A673 (cell line): ENCODE measurements at regions of chr3 and their contacts with region 1.

Region 1: DNA sequence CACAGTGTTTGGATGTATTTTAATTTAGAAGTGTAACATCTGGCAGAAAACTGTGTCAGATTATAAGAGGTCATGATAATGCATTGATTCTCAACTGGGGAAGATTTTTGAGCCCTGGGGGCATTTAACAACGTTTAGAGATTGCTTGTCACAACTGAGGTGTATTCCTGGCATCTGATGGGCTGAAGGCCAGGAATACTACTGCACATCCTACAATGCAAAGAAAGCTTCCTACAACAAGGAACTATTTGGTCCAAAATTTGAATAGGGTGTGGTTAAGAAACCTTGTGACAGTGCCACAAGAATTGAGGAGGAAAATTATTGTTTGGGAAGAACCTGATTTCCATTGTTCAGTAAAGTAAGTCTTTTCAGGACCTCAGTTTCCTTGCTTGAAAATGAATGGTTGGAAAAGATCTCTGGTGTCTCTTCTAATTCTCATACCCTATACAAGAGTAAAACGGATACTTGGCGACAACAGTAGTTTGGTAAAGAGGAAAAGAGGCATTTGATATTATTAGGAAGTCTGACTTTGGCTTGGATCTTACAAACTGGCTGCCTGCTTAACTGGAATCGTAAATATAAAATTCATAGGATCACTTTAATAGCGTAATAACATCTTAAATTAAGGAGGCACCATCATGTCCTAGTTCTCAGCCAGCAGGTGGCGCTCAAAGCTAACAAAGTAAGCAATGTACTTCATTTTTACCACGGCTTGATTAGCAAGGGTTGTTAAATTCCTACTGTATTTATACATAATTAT is 4.3 kb downstream of the DAZL start:
- DNase-seq: peak; percentile 84
- H3K4me3 ChIP-seq: no peak overlapping the region
- H3K27ac ChIP-seq: no peak overlapping the region
- H3K4me1 ChIP-seq: no peaks in the 10 kb centered on the region
- H3K27me3 ChIP-seq: peaks cover 48% of the 10 kb centered on the region
- CTCF ChIP-seq: peak; percentile 85

Region 2: GRCh38 chr3:16079519-16079918 is 521.4 kb before region 1 on chr3:
- CTCF ChIA-PET with region 1: no interaction called
- POLR2A ChIA-PET with region 1: no interaction called
- intact Hi-C with region 1: no loop called
- DNase-seq: no peak
- H3K4me3 ChIP-seq: no peak overlapping the region
- H3K27ac ChIP-seq: no peak overlapping the region
- H3K4me1 ChIP-seq: no peaks in the 10 kb centered on the region
- H3K27me3 ChIP-seq: no peaks in the 10 kb centered on the region
- CTCF ChIP-seq: no peak

Region 3: GRCh38 chr3:16264708-16265454 is 336.1 kb before region 1 on chr3 and contains the starts of genes DPH3 and OXNAD1:
- CTCF ChIA-PET with region 1: interaction called, 12 read pairs
- POLR2A ChIA-PET with region 1: no interaction called
- intact Hi-C with region 1: no loop called
- DNase-seq: peak; percentile 99
- H3K4me3 ChIP-seq: peak within 1 kb of the TSS; percentile 85
- H3K27ac ChIP-seq: peak within 1 kb of the TSS; percentile 89
- H3K4me1 ChIP-seq: peaks cover 12% of the 10 kb centered on the region
- H3K27me3 ChIP-seq: no peaks in the 10 kb centered on the region
- CTCF ChIP-seq: no peak
- total RNA-seq, gene DPH3: 24.0 and 26.4 TPM in 2 replicates
- total RNA-seq, gene OXNAD1: 19.8 and 21.5 TPM in 2 replicates

Region 4: GRCh38 chr3:16828815-16829214 is 227.9 kb after region 1 on chr3:
- CTCF ChIA-PET with region 1: no interaction called
- POLR2A ChIA-PET with region 1: no interaction called
- intact Hi-C with region 1: loop called (anchors 5 kb)
- DNase-seq: peak; percentile 37
- H3K4me3 ChIP-seq: no peak overlapping the region
- H3K27ac ChIP-seq: no peak overlapping the region
- H3K4me1 ChIP-seq: no peaks in the 10 kb centered on the region
- H3K27me3 ChIP-seq: peaks cover 4% of the 10 kb centered on the region
- CTCF ChIP-seq: peak; percentile 45

Region 5: DNA sequence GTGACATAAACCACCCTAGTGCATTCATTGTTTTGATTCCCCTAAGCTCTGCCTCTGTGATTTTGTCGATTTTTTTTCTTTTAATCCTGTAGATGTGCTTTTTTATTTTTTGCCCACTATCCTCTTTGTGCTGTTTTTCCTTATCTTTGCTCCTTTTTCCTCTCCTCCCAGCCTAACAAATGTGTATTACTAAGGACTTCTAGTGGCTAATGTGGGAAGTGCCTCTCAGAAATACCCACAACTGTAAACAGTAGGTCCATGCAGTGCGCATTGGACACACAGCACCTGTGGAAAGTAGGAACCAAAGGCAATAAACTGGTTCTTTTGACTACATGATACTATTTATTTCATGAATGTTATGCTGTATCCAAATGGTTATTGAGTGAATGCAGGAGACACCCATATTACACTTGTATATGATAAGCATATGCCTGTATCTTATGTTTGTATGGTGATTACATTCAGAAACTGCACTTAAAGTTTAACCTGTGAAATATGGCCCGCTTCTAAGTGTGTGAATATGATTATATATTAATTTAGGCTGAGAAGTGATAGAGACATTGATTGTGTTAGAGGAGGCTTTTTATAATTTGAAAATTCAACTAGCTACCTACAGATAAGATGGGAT is 431.6 kb after region 1 on chr3:
- CTCF ChIA-PET with region 1: no interaction called
- POLR2A ChIA-PET with region 1: no interaction called
- intact Hi-C with region 1: loop called (anchors 5 kb)
- DNase-seq: peak; percentile 16
- H3K4me3 ChIP-seq: no peak overlapping the region
- H3K27ac ChIP-seq: no peak overlapping the region
- H3K4me1 ChIP-seq: no peaks in the 10 kb centered on the region
- H3K27me3 ChIP-seq: peaks cover 8% of the 10 kb centered on the region
- CTCF ChIP-seq: peak; percentile 55

Region 6: GRCh38 chr3:17158941-17159682 is 558.2 kb after region 1 on chr3:
- CTCF ChIA-PET with region 1: no interaction called
- POLR2A ChIA-PET with region 1: no interaction called
- intact Hi-C with region 1: no loop called
- DNase-seq: no peak
- H3K4me3 ChIP-seq: no peak overlapping the region
- H3K27ac ChIP-seq: no peak overlapping the region
- H3K4me1 ChIP-seq: no peaks in the 10 kb centered on the region
- H3K27me3 ChIP-seq: no peaks in the 10 kb centered on the region
- CTCF ChIP-seq: no peak

Region 7: DNA sequence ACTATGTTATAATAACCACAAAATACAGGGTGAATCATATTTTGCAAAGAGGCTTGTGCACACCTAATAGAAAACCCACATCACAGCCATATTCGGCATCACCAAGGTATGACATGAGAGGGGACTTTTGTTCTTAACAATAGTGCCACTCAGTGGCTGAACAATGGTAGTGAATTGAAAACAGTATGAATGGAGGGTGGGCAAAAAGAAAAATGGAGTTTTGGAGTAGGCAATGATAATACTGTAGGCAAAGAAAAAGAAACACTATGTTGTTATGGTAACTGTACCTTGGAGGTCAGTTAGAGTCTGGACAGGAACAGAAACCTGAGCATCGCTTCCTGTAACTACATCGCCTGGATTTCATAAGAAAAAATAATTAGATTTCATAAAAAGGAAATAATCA is 632.4 kb after region 1 on chr3:
- CTCF ChIA-PET with region 1: no interaction called
- POLR2A ChIA-PET with region 1: no interaction called
- intact Hi-C with region 1: loop called (anchors 1 kb)
- DNase-seq: peak; percentile 66
- H3K4me3 ChIP-seq: no peak overlapping the region
- H3K27ac ChIP-seq: no peak overlapping the region
- H3K4me1 ChIP-seq: no peaks in the 10 kb centered on the region
- H3K27me3 ChIP-seq: no peaks in the 10 kb centered on the region
- CTCF ChIP-seq: peak; percentile 75

Region 8: GRCh38 chr3:17412950-17413530 is 812.1 kb after region 1 on chr3:
- CTCF ChIA-PET with region 1: no interaction called
- POLR2A ChIA-PET with region 1: no interaction called
- intact Hi-C with region 1: loop called (anchors 2 kb)
- DNase-seq: peak; percentile 60
- H3K4me3 ChIP-seq: no peak overlapping the region
- H3K27ac ChIP-seq: no peak overlapping the region
- H3K4me1 ChIP-seq: no peaks in the 10 kb centered on the region
- H3K27me3 ChIP-seq: no peaks in the 10 kb centered on the region
- CTCF ChIP-seq: peak; percentile 79

Region 9: DNA sequence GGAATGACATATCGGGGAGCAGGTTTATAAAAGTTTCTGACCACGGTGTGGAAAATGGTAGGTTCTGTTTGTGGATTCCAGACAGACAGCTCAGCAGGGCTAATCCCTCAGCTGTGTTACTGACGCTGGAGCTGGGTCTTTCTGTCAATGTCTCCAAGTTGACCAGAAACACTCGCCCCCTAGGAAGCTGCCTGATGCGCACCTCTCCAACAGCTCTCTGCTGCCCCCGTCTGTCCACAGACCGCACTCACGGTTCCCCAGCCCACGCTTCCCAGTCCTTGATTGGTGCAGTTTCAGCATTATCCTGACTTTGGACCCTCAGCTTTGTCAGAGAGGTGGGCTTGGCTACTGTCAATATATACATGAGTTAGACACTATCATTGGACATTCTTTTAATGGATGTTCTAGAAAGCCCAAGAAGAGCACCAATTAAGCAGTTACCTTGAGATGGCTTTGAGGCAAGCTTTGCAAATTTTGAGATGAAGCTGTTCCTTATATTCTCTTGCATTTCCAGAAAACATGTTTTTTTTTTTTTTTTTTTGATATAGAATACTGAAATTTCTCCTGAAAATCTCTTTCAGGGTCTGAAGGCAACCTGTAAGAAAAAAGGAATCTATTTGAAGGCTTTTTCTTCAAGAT is 1240.3 kb after region 1 on chr3:
- CTCF ChIA-PET with region 1: no interaction called
- POLR2A ChIA-PET with region 1: no interaction called
- intact Hi-C with region 1: loop called (anchors 10 kb)
- DNase-seq: peak; percentile 77
- H3K4me3 ChIP-seq: no peak overlapping the region
- H3K27ac ChIP-seq: no peak overlapping the region
- H3K4me1 ChIP-seq: no peaks in the 10 kb centered on the region
- H3K27me3 ChIP-seq: peaks cover 14% of the 10 kb centered on the region
- CTCF ChIP-seq: peak; percentile 95